Activated T-helper 2 cell treated with anti-CD3 and anti-CD28 coated beads, Interferon-gamma antibody, Interleukin-2, Interleukin-4, amounts not matched to agents 10 μg/mL and 5 μg/mL and 100 μg/mL, durations not matched to agents 14 hours and 24 hours and 36 hours (primary cell): ENCODE measurements at regions of chr11 and their contacts with region 1.

Region 1: GRCh38 chr11:105071089-105071732 is 26.1 kb upstream of the CARD16 start:
- DNase-seq: no peak
- H3K4me3 Mint-ChIP-seq: peak overlapping the region; percentile 27
- H3K27ac Mint-ChIP-seq: no peak overlapping the region
- H3K4me1 Mint-ChIP-seq: peaks cover 10% of the 10 kb centered on the region
- H3K27me3 Mint-ChIP-seq: no peaks in the 10 kb centered on the region

Region 2: GRCh38 chr11:105044921-105045524 is 26.2 kb before region 1 on chr11 and contains the start of gene CARD16:
- intact Hi-C with region 1: loop called (anchors 2 kb)
- DNase-seq: peak; percentile 29
- H3K4me3 Mint-ChIP-seq: peak within 1 kb of the TSS; percentile 91
- H3K27ac Mint-ChIP-seq: peak within 1 kb of the TSS; percentile 88
- H3K4me1 Mint-ChIP-seq: peaks cover 38% of the 10 kb centered on the region
- H3K27me3 Mint-ChIP-seq: peaks cover 6% of the 10 kb centered on the region
- total RNA-seq, gene CARD16: 5.2 and 5.8 TPM in 2 replicates

Region 3: DNA sequence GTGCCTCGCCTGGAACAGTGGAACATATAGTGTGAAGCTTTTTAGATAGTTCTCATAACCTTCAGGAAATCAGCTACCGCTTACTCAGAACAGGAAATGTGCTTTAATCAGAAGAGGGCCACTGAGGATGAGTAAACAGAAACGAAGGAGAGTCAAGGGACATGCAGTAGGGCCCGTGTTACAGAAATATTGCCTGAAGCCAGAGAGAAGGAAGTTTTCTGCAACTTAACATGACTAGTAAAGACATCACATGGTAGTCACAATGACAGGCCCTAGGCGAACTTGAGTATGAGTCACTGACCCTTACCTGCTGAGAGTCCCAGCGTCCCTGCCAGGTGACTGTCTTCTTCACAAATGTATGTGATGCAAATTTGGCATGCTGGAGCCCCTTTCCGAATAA is 29.0 kb after region 1 on chr11:
- intact Hi-C with region 1: loop called (anchors 2 kb)
- DNase-seq: no peak
- H3K4me3 Mint-ChIP-seq: peak overlapping the region; percentile 79
- H3K27ac Mint-ChIP-seq: peak overlapping the region; percentile 49
- H3K4me1 Mint-ChIP-seq: peaks cover 25% of the 10 kb centered on the region
- H3K27me3 Mint-ChIP-seq: no peaks in the 10 kb centered on the region